ENCODE measurements at regions of chr10 and their contacts with region 1.

Region 1: GRCh38 chr10:103244663-103245271 is 920 bp upstream of the RPEL1 start:
- DNase-seq: peak; percentile 68 to 84 (median 74)
- ATAC-seq: peak; percentile 86 to 88
- H3K4me3 ChIP-seq: no peak overlapping the region
- H3K27ac ChIP-seq: no peak overlapping the region
- H3K4me1 ChIP-seq: no peaks in the 10 kb centered on the region
- H3K27me3 ChIP-seq: no peaks in the 10 kb centered on the region

Region 2: GRCh38 chr10:102835007-102835482 is 409.7 kb before region 1 on chr10:
- intact Hi-C with region 1: loop called in 2 of 4 experiments (anchors 10 kb)
- DNase-seq: peak; percentile 75 to 85 (median 83)
- ATAC-seq: peak; percentile 91 to 92
- H3K4me3 ChIP-seq: no peak overlapping the region
- H3K27ac ChIP-seq: no peak overlapping the region
- H3K4me1 ChIP-seq: no peaks in the 10 kb centered on the region
- H3K27me3 ChIP-seq: no peaks in the 10 kb centered on the region

Region 3: DNA sequence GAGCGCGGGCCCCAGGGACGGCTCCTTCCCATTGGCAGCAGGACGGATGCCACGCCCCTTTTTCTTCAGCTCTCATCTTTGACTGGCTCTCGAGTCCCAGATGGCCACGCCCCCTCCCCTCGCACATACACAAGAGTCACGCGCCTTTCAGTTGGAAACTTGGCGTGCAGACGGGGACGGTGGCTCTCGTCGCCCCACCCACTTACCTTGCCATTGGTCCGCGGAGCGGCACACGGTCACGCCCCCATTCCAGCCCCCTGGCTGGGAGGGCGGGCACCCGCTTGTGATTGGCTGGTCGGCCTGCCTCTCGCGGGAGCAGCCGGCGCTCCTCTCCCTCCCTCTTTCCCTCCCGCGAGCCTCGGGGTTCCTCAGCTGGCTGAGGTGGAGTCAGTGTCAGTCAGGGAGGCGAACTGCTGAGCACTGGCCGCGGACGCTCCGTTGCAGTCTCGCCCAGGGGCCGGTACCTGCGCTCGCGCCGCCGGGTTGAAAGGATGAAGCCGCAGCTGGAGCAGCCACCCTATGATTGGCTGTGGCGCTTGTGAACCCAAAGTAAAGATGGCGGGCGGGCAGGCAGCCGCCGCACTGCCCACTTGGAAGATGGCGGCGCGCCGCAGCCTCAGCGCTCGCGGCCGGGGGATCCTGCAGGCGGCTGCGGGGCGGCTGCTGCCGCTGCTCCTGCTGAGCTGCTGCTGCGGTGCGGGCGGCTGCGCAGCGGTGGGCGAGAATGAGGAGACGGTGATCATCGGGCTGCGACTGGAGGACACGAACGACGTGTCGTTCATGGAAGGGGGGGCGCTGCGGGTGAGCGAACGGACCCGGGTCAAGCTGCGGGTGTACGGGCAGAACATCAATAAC is 326.6 kb before region 1 on chr10 and contains the start of gene CNNM2:
- intact Hi-C with region 1: loop called (anchors 2 to 10 kb)
- DNase-seq: peak; percentile 100
- ATAC-seq: peak; percentile 99
- H3K4me3 ChIP-seq: peak within 1 kb of the TSS; percentile 56
- H3K27ac ChIP-seq: peak within 1 kb of the TSS; percentile 27
- H3K4me1 ChIP-seq: peaks cover 7% of the 10 kb centered on the region
- H3K27me3 ChIP-seq: no peaks in the 10 kb centered on the region
- total RNA-seq, gene CNNM2: 3.6 to 4.6 (median 3.8) TPM

Region 4: DNA sequence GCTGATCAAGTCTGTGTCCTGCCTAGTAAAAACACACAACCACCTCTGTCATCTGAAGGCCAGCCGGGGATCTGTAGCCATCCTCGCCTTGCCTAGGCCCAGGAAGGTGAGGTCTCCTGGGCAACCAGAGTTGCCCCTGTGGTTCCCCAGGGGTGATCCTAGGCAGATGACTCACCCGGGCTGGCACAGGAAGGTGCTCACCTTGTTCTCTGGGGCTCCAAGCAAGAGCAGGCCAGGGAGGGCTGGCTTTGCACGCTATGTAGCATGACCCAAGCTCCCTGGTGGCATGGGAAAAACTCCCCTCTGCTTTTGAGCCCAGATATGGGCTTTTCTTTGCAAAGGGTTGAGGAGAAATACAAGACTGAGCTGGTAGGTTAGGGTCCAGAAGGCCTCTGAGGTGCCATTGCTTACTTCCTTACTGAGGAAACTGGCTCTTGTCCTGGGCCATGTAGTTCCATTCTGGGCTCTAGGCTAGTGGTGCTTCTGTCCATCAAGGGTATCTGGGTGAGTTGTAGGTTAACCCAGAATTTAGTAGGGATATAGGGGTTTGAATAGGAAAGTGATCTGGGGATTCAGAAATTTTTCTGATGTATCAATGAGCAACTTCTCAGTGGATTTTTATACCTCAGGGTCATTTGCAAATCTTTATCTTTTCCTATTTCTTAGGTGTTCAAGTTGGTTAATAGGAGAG is 163.7 kb before region 1 on chr10:
- intact Hi-C with region 1: loop called in 1 of 4 experiments (anchors 10 kb)
- DNase-seq: no peak
- ATAC-seq: no peak
- H3K4me3 ChIP-seq: no peak overlapping the region
- H3K27ac ChIP-seq: no peak overlapping the region
- H3K4me1 ChIP-seq: no peaks in the 10 kb centered on the region
- H3K27me3 ChIP-seq: no peaks in the 10 kb centered on the region

Region 5: GRCh38 chr10:103102195-103102594 is 142.6 kb before region 1 on chr10:
- intact Hi-C with region 1: loop called in 1 of 4 experiments (anchors 10 kb)
- DNase-seq: no peak
- ATAC-seq: no peak
- H3K4me3 ChIP-seq: no peak overlapping the region
- H3K27ac ChIP-seq: no peak overlapping the region
- H3K4me1 ChIP-seq: no peaks in the 10 kb centered on the region
- H3K27me3 ChIP-seq: no peaks in the 10 kb centered on the region

Region 6: GRCh38 chr10:103111031-103111917 is 133.5 kb before region 1 on chr10:
- intact Hi-C with region 1: loop called in 2 of 4 experiments (anchors 10 kb)
- DNase-seq: no peak
- ATAC-seq: peak; percentile 87 to 92
- H3K4me3 ChIP-seq: peak overlapping the region; percentile 15
- H3K27ac ChIP-seq: no peak overlapping the region
- H3K4me1 ChIP-seq: peaks cover 3% of the 10 kb centered on the region
- H3K27me3 ChIP-seq: no peaks in the 10 kb centered on the region

Measured in right cardiac atrium (tissue), 5 donors.